ENCODE measurements at regions of chr10 and their contacts with region 1.

Region 1: GRCh38 chr10:69449841-69450240 is 1.4 kb upstream of the TSPAN15 start:
- DNase-seq: peak; percentile 23
- H3K4me3 ChIP-seq: no peak overlapping the region
- CTCF ChIP-seq: peak; percentile 39

Region 2: GRCh38 chr10:69494626-69495558 is 45.1 kb after region 1 on chr10:
- in situ Hi-C with region 1: loop called (anchors 10 kb)
- DNase-seq: no peak
- H3K4me3 ChIP-seq: no peak overlapping the region
- CTCF ChIP-seq: no peak